Heart left ventricle (tissue), 16 donors: ENCODE measurements at regions of chr12 and their contacts with region 1.

Region 1: DNA sequence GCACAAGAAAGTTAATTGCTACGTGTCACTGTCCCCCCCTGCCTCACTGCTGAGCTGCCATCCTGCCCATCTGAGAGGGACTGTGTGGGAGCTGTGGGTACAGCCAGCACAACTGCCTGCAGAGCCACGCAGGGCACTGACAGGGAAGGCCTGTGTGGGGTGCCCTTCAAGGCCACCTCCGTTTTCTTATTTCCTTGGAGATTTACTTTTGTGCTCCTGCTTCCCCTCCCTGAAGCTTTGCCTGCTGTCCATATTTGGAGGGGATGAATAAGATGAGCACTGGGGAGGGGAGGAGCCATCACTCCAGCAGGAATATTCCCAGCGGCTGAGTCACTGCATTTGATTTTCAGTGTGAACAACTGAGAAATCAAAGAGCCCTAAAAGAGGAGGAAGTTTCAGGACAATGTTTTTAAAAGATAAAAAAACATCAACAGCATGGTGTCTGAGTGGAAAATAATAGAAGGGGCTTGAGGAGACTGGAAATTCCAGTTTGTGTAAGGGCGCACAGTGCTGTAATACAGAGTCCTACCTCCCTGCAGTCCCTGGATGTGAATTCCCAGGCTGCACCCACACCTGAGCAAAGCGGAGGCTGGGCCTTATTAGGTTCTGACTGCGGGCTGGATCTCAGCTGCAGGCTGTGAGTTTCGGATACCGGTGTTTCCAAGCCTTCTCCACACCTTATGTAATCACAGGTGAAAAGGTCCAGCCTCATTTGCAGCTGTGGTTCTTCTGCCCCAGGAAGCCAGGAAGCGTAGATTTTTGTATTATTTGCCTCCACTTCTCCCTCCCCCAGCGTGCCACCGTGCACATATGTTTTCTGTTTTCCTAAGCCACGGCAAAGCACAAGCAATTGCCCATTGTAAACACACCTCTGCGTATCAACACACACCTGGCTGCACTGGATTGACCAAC is 192.6 kb upstream of the BCL2L14 start:
- DNase-seq: peak in 4 of 5 donors; percentile 45 to 58 (median 50)
- ATAC-seq: peak; percentile 38 to 84 (median 82)
- H3K4me3 ChIP-seq: no peak overlapping the region
- H3K27ac ChIP-seq: peak overlapping the region in 6 of 12 donors; percentile 4 to 59 (median 33)
- H3K4me1 ChIP-seq: peaks cover 8 to 81% (median 41%) of the 10 kb centered on the region in 12 donors
- H3K27me3 ChIP-seq: no peaks in the 10 kb centered on the region
- CTCF ChIP-seq: no peak
- POLR2A ChIP-seq: no peak

Region 2: GRCh38 chr12:11765817-11766794 is 112.0 kb before region 1 on chr12:
- intact Hi-C with region 1: no loop called
- DNase-seq: peak in 4 of 5 donors; percentile 27 to 54 (median 38)
- ATAC-seq: peak; percentile 43 to 75 (median 65)
- H3K4me3 ChIP-seq: peak overlapping the region in 6 of 12 donors; percentile 2 to 23 (median 7)
- H3K27ac ChIP-seq: peak overlapping the region in 11 of 12 donors; percentile 64 to 90 (median 81)
- H3K4me1 ChIP-seq: peaks cover 5 to 98% (median 71%) of the 10 kb centered on the region in 12 donors
- H3K27me3 ChIP-seq: no peaks in the 10 kb centered on the region
- CTCF ChIP-seq: no peak
- POLR2A ChIP-seq: no peak

Region 3: DNA sequence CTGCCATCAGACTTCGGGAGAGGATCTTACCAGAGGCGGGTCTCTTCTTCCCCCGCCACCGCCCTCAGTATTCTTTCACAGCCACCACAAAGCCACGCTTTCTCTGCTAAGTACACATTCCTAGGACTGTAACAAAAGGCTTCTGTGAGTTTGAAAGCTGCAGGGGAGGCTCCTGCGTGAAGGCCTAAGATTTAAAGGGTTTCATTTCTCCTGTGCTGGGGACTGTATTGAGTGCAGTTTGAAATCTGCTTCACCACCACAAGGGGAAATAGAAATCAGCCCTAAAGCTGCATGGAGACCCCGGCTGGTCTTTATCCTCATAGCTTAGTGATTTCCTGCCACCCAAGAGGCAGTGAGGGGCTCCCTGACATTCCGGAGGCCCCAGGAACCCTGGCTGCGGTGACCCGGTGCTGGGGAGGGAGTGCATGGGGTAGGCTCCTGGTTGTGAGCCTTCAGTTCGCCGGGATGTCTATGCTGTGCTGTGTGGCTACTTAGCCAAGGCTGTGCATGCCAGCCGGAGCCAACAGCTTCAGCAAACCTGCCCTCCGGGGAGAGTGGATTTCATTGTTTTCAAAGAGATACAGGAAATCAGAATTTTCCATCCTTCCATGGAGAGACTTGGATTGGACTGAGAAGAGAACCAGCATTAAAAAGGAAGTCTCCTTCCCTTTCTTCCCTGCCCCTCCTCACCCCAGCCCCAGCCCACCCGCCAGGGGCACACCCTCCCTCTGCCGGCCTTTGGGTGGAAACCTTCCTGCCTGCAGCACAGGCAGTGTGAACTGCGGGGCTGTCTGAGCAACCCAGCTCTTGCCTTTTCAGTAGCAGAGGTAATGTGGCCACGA is 65.3 kb before region 1 on chr12:
- intact Hi-C with region 1: loop called in 1 of 10 experiments (anchors 5 kb)
- DNase-seq: peak; percentile 47 to 80 (median 57)
- ATAC-seq: peak; percentile 62 to 82 (median 78)
- H3K4me3 ChIP-seq: peak overlapping the region in 10 of 12 donors; percentile 12 to 47 (median 31)
- H3K27ac ChIP-seq: peak overlapping the region; percentile 66 to 89 (median 76)
- H3K4me1 ChIP-seq: peaks cover 4 to 74% (median 51%) of the 10 kb centered on the region in 12 donors
- H3K27me3 ChIP-seq: no peaks in the 10 kb centered on the region
- CTCF ChIP-seq: peak in 7 of 12 donors; percentile 4 to 36 (median 14)
- POLR2A ChIP-seq: no peak

Region 4: GRCh38 chr12:11839091-11839641 is 39.0 kb before region 1 on chr12:
- intact Hi-C with region 1: loop called in 1 of 10 experiments (anchors 1 kb)
- DNase-seq: peak in 3 of 5 donors; percentile 48 to 62 (median 54)
- ATAC-seq: peak; percentile 30 to 78 (median 68)
- H3K4me3 ChIP-seq: no peak overlapping the region
- H3K27ac ChIP-seq: peak overlapping the region; percentile 0 to 96 (median 68)
- H3K4me1 ChIP-seq: peaks cover 0 to 72% (median 47%) of the 10 kb centered on the region in 12 donors
- H3K27me3 ChIP-seq: no peaks in the 10 kb centered on the region
- CTCF ChIP-seq: no peak
- POLR2A ChIP-seq: no peak

Region 5: DNA sequence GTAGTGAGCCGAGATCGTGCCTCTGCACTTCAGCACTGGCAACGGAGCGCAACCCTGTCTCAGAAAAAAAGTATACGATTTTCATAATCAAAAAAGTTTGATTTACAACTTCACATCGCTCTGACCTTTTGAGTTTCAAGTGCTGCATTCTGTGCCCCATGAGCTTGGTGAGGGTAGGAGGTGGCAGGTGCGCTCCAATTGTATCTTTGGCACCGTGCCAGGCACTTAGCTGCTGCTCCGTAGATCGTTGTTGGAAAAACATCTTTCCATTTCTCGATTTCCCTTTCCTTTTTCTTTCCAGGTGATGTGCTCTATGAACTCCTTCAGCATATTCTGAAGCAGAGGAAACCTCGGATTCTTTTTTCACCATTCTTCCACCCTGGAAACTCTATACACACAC is 25.0 kb before region 1 on chr12:
- intact Hi-C with region 1: no loop called
- DNase-seq: no peak
- ATAC-seq: no peak
- H3K4me3 ChIP-seq: no peak overlapping the region
- H3K27ac ChIP-seq: peak overlapping the region in 1 of 12 donors; percentile 37
- H3K4me1 ChIP-seq: peaks cover 0 to 35% (median 6%) of the 10 kb centered on the region in 12 donors
- H3K27me3 ChIP-seq: no peaks in the 10 kb centered on the region
- CTCF ChIP-seq: no peak
- POLR2A ChIP-seq: no peak

Region 6: DNA sequence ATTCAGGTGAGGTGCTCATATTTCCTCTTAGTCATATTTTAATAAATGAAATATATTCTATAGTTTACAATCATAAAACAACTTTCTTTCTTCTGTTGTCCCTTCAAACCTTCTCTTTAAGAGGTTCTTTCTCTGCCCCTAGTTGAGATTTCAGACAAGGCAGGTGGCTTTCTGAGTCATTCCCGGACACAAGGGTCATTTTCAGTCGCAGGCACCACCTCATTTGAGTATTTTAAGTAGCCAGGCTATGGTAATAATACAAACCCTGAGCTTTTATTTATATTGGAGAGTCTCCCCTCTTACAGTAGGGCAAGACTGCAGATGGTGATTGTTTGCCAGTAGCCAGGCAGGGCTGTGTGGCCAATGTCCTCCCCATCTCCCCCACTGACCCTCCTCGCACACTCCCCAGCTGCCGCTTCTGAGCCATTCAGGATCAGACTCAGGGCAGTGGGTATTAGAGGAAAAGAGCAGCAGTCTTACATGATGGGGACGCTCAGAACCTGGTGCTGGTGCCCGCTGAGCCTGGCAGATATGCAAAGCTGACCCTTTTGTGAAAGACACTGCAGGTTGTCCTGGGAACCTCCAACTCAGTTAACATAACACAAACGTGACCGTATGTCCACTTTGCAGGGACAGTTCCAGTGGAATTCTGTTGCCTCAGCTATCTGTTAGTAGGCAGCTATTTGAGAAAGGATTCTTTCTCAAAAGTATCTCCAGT is 91.5 kb after region 1 on chr12:
- intact Hi-C with region 1: no loop called
- DNase-seq: no peak
- ATAC-seq: no peak
- H3K4me3 ChIP-seq: no peak overlapping the region
- H3K27ac ChIP-seq: no peak overlapping the region
- H3K4me1 ChIP-seq: no peaks in the 10 kb centered on the region
- H3K27me3 ChIP-seq: no peaks in the 10 kb centered on the region
- CTCF ChIP-seq: no peak
- POLR2A ChIP-seq: no peak